ENCODE measurements at regions of chrX and their contacts with region 1.

Region 1: DNA sequence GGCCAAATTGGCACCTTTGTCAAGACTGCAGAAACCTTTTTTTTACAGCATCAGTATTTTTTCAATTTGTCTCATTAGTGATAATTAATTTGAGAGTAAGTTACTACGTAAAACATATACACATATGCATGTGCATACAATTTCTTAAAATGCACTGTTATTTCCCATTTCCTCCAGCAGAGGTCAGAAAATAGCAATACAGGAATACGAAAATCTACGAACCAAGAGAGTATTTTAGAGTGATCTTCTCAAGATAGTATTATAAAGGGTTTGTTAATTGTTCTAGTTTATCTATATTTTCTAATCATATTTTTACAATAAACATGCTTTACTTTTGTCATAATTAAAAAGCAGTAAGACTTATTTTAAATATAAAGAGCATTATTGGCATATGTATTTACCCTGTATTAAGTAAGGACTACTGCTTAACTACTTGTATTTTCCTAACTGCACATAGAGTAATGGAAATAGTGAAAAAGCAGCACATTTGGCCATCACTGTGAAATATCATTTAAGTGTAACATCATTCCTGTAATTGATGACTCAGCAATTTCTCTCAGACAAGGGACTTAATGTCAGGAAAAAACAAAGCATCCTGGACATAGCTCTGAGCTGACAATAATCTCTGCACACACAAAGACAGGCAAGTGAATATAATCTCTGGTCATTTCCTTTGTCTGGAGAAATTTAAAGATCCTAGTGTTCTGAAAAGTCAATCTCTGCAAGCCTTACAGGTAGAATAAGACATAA is 45.6 kb downstream of the MAOB start:
- DNase-seq: no peak
- ATAC-seq: no peak
- H3K4me3 Mint-ChIP-seq: no peak overlapping the region
- H3K27ac Mint-ChIP-seq: no peak overlapping the region
- H3K4me1 Mint-ChIP-seq: no peaks in the 10 kb centered on the region
- H3K27me3 Mint-ChIP-seq: no peaks in the 10 kb centered on the region

Region 2: DNA sequence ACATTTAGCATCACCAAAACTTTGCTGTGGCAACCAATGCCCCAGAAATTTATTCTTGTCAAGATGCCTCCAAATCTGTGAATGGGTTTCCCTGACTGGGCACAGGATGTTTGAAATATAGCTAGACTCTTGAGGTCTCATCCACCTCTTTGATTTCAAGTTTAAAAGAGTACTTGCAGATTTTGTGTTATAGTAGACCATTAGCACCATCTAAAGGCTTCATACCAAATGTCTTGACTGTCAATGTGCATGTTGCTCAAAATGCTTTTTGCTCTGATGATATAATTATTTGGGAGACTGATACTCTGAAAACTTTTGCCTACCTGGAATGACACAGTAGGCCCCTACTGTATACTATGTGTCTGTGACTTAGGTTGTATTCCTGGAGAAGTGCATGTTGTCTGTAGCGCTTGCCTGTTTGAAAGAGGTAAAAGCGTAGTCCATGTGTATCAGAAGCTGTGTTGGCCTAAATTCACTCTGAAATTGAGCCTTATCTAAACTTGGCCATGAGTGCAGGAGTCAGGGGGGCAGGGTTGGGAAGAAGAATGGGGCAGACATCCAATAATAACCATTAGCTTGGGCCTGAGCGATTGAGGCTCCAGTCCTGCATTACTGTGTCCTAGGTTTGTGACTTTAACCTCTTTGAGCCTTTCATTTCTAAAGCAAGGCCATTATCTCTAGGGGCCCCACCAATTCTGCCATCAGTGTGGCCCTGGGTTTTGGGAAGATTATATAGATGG is 102.7 kb after region 1 on chrX:
- CTCF ChIA-PET with region 1: no interaction called
- POLR2A ChIA-PET with region 1: no interaction called
- intact Hi-C with region 1: loop called in 1 of 2 experiments (anchors 5 kb)
- DNase-seq: no peak
- ATAC-seq: no peak
- H3K4me3 Mint-ChIP-seq: no peak overlapping the region
- H3K27ac Mint-ChIP-seq: no peak overlapping the region
- H3K4me1 Mint-ChIP-seq: no peaks in the 10 kb centered on the region
- H3K27me3 Mint-ChIP-seq: no peaks in the 10 kb centered on the region